PC-9 (cell line): ENCODE measurements at regions of chr21 and their contacts with region 1.

Region 1: DNA sequence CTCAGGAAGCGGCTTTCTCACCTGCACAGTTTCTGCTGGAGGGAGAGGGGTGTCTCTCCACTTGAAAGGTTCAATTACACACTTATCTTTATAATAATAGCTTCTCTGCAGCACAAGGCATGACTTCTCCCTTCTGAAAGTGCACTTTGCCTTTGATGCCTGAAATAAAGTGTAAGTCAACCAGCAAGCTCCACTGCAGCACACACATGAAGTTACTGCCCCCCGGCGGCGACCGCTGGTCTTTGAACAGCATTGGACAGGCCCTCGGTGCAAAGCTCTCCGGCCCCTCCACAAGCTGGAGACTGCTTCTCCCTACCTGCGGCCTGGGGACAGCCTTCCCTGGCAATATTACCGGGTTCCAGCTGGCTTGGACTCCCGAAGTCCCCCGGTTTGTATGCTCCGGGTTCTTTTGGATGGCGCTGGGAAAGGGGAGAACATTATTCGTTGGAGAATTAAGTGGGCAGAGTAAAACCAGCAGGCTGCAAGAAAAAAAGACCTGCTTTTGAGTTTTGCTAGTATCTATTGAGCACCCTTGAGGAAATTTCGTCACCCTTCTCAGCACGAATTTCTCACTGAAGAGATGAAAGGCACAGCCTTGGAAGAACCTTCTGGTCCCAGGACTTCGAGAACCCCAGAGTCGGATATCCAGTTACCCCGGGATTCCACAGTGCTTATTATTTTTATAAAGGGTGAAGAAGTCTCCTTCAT is 11.8 kb downstream of the RCAN1 start:
- DNase-seq: peak in 1 of 2 experiments; percentile 71
- H3K4me3 ChIP-seq: no peak overlapping the region
- H3K27ac ChIP-seq: no peak overlapping the region
- H3K4me1 ChIP-seq: peaks cover 25% of the 10 kb centered on the region
- H3K27me3 ChIP-seq: no peaks in the 10 kb centered on the region
- CTCF ChIP-seq: peak; percentile 71

Region 2: DNA sequence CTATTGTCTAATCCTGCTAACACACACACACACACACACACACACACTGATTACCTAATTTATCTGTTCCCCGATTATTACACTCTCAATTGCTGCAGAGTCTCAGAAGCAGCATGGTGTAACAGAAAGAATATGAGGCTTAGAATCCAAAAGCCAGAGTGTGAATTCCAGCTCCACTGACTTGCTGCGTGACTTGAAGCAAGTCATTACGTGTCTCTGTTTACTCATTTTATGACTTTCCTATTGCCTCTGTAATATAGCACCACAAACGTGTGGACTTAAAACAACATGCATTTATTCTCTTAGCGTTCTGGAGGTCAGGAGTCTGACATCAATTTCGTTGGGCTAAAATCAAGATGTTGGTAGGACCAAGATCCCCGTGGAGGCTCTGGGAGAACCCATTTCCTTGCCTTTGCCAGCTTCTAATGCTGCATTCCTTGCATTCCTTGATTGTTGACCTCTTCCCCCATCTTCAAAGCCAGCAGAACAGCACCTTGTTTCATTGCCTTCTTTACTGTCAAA is 631.6 kb before region 1 on chr21:
- CTCF ChIA-PET with region 1: interaction called, 16 read pairs
- POLR2A ChIA-PET with region 1: no interaction called
- intact Hi-C with region 1: no loop called
- DNase-seq: no peak
- H3K4me3 ChIP-seq: no peak overlapping the region
- H3K27ac ChIP-seq: no peak overlapping the region
- H3K4me1 ChIP-seq: peaks cover 10% of the 10 kb centered on the region; the same call in 1 of the 2 replicates
- H3K27me3 ChIP-seq: no peaks in the 10 kb centered on the region
- CTCF ChIP-seq: no peak

Region 3: GRCh38 chr21:34510148-34511142 is 92.7 kb before region 1 on chr21:
- CTCF ChIA-PET with region 1: interaction called, 7 read pairs
- POLR2A ChIA-PET with region 1: no interaction called
- intact Hi-C with region 1: loop called (anchors 1 kb)
- DNase-seq: peak; percentile 56 to 57
- H3K4me3 ChIP-seq: no peak overlapping the region
- H3K27ac ChIP-seq: no peak overlapping the region
- H3K4me1 ChIP-seq: 0 out of 2 replicates have a peak, but pooled peaks cover 3% of the 10 kb centered on the region
- H3K27me3 ChIP-seq: no peaks in the 10 kb centered on the region
- CTCF ChIP-seq: peak; percentile 73

Region 4: DNA sequence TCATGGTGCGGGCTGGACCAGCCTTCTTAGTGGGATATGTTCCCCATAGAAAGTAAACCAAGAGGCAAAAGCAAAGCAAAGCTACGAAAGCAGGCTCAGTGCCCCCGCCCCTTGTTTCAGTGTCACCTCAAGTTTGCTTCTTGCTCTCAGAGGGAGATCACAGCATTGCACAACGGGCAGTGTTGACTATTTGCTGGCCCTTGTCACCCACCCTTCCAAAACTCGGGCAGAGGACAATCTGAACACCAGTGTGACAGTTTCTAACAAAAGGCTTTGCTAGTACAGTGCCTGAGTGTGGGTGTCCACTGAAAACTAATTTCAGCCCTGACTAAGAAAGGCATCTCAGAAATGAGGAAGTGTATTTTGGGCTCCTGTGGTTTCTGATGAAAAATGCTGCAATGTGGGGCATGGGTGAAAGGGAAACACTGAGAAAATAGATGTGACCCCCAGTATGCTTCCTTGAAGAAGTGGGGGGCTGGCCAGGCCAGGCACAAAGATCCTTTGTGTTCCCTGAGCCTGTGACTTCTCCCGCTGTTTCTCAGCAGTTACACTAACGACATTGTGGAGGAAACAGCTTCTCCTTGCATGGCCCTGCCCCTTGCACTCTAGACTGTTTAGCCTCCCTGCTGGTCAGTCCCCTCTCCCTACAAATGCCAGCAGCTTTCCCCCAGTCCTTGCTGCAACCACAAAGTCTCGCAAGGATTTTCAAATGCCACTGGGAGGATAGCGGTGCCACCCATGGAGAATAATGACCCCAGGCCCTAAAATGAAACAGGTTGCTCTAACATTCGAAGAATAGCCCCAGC is 57.9 kb before region 1 on chr21:
- CTCF ChIA-PET with region 1: interaction called, 3 read pairs
- POLR2A ChIA-PET with region 1: no interaction called
- intact Hi-C with region 1: loop called (anchors 2 kb)
- DNase-seq: peak; percentile 65 to 98
- H3K4me3 ChIP-seq: peak overlapping the region; percentile 35; the same call in 1 of the 2 replicates
- H3K27ac ChIP-seq: peak overlapping the region; percentile 100
- H3K4me1 ChIP-seq: peaks cover 50% of the 10 kb centered on the region
- H3K27me3 ChIP-seq: no peaks in the 10 kb centered on the region
- CTCF ChIP-seq: no peak

Region 5: DNA sequence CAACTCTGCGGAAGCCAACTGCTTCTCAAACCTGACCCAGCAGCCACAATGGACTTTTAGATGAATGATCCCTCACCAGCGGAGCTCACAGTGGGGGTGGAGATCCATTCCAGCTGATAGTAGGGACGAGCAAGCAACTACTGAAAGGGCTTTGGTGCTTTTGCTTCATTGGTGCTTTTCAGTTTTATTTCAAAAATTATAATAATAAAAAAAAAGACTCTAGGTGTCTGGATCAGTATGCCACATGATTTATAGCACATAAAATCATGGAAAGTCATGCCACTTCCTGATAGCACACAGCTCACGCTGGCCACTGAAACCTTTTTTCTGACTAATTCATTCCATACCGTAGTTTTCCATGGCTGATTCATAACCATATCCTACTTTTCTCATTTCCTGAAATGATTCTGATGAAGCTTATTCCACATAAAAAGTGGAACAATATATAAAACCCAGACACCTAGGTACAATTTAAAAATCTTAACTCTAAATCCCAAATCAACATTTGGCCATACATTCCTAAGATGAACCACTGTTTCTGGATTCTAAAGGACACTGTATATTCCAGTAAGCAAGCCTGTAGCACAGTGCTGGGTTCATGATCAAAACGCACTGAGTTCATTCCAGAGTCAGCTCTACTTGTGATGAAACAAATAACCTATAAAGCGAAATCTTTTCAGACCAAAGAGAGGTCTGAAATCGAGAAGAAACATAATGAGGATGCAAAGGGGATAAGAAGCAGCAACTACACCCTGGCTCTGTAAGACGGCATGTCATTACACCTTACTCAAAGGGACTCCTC is 49.8 kb before region 1 on chr21:
- CTCF ChIA-PET with region 1: interaction called, 12 read pairs
- POLR2A ChIA-PET with region 1: no interaction called
- intact Hi-C with region 1: no loop called
- DNase-seq: peak in 1 of 2 experiments; percentile 57
- H3K4me3 ChIP-seq: no peak overlapping the region
- H3K27ac ChIP-seq: peak overlapping the region; percentile 51
- H3K4me1 ChIP-seq: peaks cover 7% of the 10 kb centered on the region; the same call in 1 of the 2 replicates
- H3K27me3 ChIP-seq: no peaks in the 10 kb centered on the region
- CTCF ChIP-seq: no peak